ENCODE measurements at regions of chr16 and their contacts with region 1.

Region 1: DNA sequence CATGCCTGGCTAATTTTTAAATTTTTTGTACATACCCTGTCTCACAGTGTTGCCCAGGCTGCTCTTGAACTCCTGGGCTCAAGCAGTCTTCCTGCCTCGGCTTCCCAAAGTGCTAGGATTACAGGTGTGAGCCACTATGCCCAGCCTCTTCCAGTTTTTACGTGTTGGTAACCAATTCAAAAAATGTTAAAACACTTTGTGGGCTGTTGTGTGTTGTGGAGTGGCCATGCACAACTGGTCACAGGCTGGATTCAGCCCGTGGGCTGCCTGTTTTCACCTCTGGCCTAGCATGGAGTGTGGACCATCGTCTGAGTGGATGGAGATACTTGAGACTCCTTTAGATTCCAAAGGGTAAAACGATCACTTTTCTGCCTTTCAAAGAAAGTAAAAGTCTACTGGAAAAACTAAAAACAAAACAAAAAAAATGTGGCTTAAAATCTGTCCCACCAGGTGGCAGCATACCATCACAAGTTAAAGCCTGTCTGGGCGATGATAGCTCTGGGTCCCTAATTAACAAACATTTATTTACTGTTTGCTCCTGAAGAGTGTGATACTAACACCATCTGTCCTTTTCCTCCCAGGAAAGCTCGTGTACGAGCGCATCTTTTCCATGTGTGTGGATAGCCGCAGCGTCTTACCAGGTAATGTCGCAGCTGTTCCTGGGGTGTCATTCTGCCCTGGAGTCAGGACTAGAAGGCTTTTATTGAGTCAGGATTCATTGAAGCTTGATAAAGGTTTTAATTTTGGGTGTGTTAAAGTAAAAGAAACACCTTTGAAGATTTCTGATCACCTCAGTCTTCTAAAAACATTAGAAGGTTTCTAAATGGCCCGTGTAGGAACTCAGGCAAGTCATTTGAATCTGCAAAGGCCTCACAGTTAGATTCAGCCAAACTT is 45.8 kb downstream of the VPS35L start:
- DNase-seq: peak; percentile 48
- H3K4me3 Mint-ChIP-seq: no peak overlapping the region
- H3K27ac Mint-ChIP-seq: peak overlapping the region; percentile 27
- H3K4me1 Mint-ChIP-seq: no peaks in the 10 kb centered on the region
- H3K27me3 Mint-ChIP-seq: no peaks in the 10 kb centered on the region
- CTCF ChIP-seq: peak; percentile 55

Region 2: GRCh38 chr16:19513377-19514053 is 87.8 kb before region 1 on chr16:
- CTCF ChIA-PET with region 1: no interaction called
- POLR2A ChIA-PET with region 1: no interaction called
- intact Hi-C with region 1: no loop called
- DNase-seq: peak; percentile 52
- H3K4me3 Mint-ChIP-seq: no peak overlapping the region
- H3K27ac Mint-ChIP-seq: peak overlapping the region; percentile 57
- H3K4me1 Mint-ChIP-seq: peaks cover 23% of the 10 kb centered on the region
- H3K27me3 Mint-ChIP-seq: no peaks in the 10 kb centered on the region
- CTCF ChIP-seq: no peak

Region 3: GRCh38 chr16:19555162-19555937 is 46.0 kb before region 1 on chr16 and contains the start of gene VPS35L:
- CTCF ChIA-PET with region 1: interaction called, 55 read pairs
- POLR2A ChIA-PET with region 1: no interaction called
- intact Hi-C with region 1: loop called (anchors 5 kb)
- DNase-seq: peak; percentile 96
- H3K4me3 Mint-ChIP-seq: peak within 1 kb of the TSS; percentile 90
- H3K27ac Mint-ChIP-seq: peak within 1 kb of the TSS; percentile 96
- H3K4me1 Mint-ChIP-seq: peaks cover 8% of the 10 kb centered on the region
- H3K27me3 Mint-ChIP-seq: no peaks in the 10 kb centered on the region
- CTCF ChIP-seq: peak; percentile 51
- total RNA-seq, gene VPS35L: 50.2 and 55.5 TPM in 2 replicates

Region 4: GRCh38 chr16:19583665-19584300 is 17.5 kb before region 1 on chr16:
- CTCF ChIA-PET with region 1: interaction called, 85 read pairs
- POLR2A ChIA-PET with region 1: no interaction called
- intact Hi-C with region 1: no loop called
- DNase-seq: peak; percentile 70
- H3K4me3 Mint-ChIP-seq: no peak overlapping the region
- H3K27ac Mint-ChIP-seq: no peak overlapping the region
- H3K4me1 Mint-ChIP-seq: no peaks in the 10 kb centered on the region
- H3K27me3 Mint-ChIP-seq: no peaks in the 10 kb centered on the region
- CTCF ChIP-seq: peak; percentile 93

Region 5: GRCh38 chr16:19696328-19696727 is 95.0 kb after region 1 on chr16:
- CTCF ChIA-PET with region 1: interaction called, 8 read pairs
- POLR2A ChIA-PET with region 1: no interaction called
- intact Hi-C with region 1: loop called (anchors 10 kb)
- DNase-seq: peak; percentile 87
- H3K4me3 Mint-ChIP-seq: peak overlapping the region; percentile 11
- H3K27ac Mint-ChIP-seq: peak overlapping the region; percentile 85
- H3K4me1 Mint-ChIP-seq: peaks cover 24% of the 10 kb centered on the region
- H3K27me3 Mint-ChIP-seq: no peaks in the 10 kb centered on the region
- CTCF ChIP-seq: no peak

Region 6: DNA sequence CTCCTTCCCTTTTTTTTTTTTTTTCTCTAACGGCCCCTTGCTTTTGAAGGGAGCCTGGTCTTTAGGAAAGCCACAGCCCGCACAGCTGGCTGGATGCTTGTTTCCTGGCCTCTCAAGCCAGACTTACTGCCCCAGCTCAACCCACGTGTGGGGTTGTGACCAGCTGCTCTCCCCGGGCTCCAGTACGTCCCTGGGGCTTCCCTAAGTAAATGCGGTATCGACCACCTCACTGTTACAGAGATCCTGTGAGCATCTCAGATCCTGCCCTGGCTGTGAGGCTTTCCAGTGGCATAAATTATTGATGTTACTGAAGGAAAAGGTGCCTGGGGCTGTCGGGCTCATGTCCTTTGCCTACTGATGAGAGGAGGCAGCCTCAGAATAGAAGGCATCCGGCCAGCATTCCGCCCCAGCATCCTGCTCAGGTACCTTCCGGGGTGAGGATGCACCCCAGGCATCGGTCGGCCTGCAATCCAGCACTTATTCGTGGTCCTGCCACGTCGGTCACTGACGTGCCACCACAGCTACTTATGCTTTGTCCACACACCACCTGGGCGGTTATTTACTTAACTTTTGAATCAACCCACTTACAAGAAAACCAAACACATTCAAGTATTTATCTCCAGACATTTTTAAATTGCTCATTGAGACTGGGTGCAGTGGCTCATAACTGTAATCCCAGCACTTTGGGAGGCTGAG is 273.7 kb after region 1 on chr16:
- CTCF ChIA-PET with region 1: interaction called, 43 read pairs
- POLR2A ChIA-PET with region 1: no interaction called
- intact Hi-C with region 1: no loop called
- DNase-seq: no peak
- H3K4me3 Mint-ChIP-seq: no peak overlapping the region
- H3K27ac Mint-ChIP-seq: no peak overlapping the region
- H3K4me1 Mint-ChIP-seq: peaks cover 6% of the 10 kb centered on the region
- H3K27me3 Mint-ChIP-seq: no peaks in the 10 kb centered on the region
- CTCF ChIP-seq: no peak

Region 7: DNA sequence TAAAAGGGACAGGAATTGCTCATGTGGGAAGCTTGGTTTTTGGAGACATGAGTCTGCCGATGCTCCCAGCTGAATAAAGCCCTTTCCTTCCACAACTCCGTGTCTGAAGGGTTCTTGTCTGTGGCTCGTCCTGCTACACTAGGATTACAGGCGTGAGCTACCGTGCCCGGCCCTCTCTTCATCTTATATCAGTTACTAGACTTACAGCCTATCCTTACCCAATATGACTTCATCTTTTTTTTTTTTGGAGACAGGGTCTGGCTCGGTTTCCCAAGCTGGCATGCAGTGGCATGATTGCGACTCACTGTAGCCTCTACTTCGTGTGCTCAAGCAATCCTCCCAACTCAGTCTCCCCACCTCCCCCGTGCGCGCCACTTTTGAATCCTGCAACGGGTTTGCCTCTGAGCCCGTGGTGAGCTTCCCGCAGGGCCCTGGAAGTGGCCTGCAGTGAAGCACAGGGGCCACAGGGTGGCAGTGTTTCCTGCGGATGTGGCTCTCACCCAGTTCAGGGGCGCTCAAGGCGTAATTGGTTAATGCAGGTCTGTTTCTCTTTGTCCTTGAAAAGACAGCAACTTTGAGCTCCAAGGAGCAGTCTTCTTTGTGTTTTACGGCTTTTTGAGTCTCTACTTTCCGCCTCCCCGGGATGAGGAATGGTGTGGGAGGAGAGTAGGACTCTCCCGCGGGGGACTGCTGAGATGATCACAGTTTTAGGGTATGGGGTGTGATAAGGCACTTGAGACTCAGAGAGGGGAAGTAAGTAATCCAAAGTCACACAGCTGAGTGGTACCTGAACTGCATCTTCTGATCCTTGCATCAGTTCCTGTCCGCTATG is 306.0 kb after region 1 on chr16:
- CTCF ChIA-PET with region 1: interaction called, 17 read pairs
- POLR2A ChIA-PET with region 1: no interaction called
- intact Hi-C with region 1: no loop called
- DNase-seq: peak; percentile 73
- H3K4me3 Mint-ChIP-seq: no peak overlapping the region
- H3K27ac Mint-ChIP-seq: no peak overlapping the region
- H3K4me1 Mint-ChIP-seq: no peaks in the 10 kb centered on the region
- H3K27me3 Mint-ChIP-seq: peaks cover 14% of the 10 kb centered on the region
- CTCF ChIP-seq: peak; percentile 96